OCI-LY7 (cell line): ENCODE measurements at regions of chr17 and their contacts with region 1.

Region 1: DNA sequence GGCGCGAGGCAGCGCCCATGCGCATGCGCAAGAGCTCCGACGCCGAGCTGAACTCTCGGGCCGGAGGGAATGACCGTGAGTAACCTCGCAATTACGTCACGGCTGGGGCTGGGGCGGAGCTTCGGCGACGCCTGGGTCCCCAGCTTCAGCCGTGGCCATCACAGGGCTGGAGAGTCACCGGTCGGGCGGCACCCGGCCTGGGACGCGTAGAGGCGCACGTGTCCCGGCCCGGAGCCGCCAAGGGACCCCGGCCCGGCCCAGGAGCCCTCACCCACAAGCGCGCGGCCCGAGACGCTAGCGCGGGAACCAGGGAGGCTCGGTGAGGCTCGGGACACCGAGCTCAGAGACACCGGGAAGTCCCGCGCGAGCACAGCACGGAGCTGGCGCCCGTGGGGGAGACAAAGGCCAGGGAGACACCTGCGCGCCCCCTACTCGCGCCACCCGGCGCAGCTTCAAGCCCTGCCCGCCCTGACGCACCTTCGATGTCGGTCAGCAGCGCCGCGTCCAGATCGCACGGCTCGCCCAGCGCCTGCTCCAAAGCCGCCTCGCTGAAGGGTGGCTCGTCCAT is 452 bp downstream of the SREBF1 start:
- DNase-seq: peak; percentile 98
- H3K4me3 ChIP-seq: peak overlapping the region; percentile 77
- H3K27ac ChIP-seq: peak overlapping the region; percentile 88
- H3K4me1 ChIP-seq: peaks cover 71% of the 10 kb centered on the region
- CTCF ChIP-seq: no peak

Region 2: DNA sequence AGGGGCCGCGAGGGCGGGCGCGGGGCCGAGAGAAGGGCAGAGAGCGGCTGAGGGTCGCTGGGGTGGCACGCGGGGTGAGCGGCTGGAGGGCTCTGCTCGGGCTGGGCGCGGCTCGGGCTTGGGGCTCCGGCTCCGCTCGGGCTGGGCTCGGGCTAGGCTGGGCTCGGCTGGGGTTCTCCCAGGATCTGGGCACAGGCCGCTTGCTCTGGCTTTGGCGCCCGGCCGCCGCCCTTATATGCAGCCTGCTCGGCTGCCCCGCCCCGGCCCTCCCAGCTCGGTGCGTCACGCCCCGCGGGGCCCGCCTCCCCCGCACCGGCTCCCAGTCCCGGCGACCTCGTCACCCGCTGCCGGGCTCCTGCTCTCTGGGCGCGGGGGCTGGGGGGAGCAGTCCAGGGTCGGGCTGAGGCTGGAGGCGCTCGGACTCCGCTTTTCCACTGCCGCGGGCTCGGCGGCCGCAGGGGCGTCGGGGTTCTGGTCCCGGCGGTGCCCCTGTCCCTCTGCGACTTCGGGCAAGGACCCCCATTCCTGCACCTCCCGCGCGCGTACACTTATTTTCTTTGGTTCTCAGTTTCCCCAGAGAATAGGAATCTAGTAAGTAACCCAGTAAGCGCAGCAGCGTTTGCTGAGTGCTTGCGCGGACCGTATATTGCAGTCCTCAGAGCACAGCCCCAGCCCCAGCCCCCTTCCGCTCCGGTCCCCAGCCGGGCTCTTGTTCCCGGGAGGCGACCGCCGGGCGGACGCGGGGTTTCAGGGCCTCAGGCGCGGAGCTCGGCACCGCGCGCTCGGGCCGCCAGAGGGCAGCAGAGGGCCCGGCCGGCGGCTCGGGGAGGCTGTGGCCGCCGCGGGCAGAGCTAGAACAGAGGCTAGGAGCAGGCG is 339.9 kb before region 1 on chr17 and contains the start of gene RASD1:
- CTCF ChIA-PET with region 1: no interaction called
- POLR2A ChIA-PET with region 1: no interaction called
- intact Hi-C with region 1: no loop called
- DNase-seq: peak; percentile 75
- H3K4me3 ChIP-seq: peak within 1 kb of the TSS; percentile 41
- H3K27ac ChIP-seq: no peak within 1 kb of the TSS
- H3K4me1 ChIP-seq: peaks cover 10% of the 10 kb centered on the region
- CTCF ChIP-seq: peak; percentile 83
- total RNA-seq, gene RASD1: 0.08 and 0.19 TPM in 2 replicates

Region 3: DNA sequence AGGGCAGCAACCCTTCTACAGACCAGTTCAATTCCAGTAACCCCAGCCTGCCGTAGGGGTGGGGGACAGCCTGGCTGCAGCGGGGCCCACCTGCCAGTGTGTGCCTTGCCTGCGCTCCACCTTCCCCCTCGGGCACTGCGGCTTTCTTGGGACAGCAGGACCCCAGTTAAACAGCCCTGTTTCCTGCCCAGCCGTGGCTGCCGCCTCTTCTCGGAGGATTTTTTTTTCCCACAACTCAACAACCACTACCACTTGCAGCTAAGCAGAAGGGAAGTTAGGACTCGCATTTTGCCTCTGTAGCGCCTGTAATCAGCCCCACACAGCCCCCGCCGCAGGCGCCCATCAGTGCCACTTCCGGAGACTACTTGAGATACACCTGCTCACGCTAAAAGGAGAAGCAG is 78.9 kb before region 1 on chr17:
- CTCF ChIA-PET with region 1: no interaction called
- POLR2A ChIA-PET with region 1: interaction called, 5 read pairs
- intact Hi-C with region 1: loop called (anchors 2 kb)
- DNase-seq: peak; percentile 91
- H3K4me3 ChIP-seq: peak overlapping the region; percentile 61
- H3K27ac ChIP-seq: peak overlapping the region; percentile 98
- H3K4me1 ChIP-seq: peaks cover 100% of the 10 kb centered on the region
- CTCF ChIP-seq: no peak

Region 4: DNA sequence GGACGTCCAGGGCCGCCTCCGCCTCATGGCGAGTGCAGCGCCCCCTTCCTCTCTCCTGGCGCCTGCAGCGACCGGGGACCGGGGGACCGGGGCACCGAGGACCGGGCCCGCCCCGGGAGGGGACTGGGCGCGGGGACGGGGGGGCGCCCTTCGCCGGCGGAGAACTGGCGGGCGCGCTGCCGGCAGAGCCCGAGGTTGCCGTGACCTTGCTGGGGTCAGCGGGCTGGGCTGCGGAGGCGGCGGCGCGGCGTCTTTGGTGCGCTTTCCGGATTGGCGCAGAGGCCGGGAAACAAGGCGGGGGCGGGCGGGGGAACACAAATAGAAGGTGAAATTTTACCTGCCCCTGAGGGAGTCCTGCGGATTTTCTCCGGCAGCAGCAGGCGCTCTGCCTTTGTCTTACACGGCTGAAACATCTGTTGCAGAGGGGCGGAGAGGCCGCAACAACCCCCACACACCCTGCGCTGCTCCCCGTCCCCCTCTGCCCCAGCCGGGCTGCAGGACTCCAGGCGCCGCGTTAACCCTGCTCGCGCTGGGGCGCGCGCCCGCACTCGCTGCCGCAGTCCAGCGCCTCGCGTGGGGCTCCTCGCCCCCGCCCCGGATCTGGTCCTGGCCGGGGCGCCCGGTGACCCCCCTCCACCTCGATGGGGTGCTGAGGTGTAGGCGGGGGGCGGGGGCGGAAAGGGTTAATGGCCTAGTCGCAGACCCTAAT is 53.1 kb before region 1 on chr17:
- CTCF ChIA-PET with region 1: no interaction called
- POLR2A ChIA-PET with region 1: no interaction called
- intact Hi-C with region 1: no loop called
- DNase-seq: peak; percentile 93
- H3K4me3 ChIP-seq: peak overlapping the region; percentile 68
- H3K27ac ChIP-seq: peak overlapping the region; percentile 99
- H3K4me1 ChIP-seq: peaks cover 54% of the 10 kb centered on the region
- CTCF ChIP-seq: peak; percentile 66

Region 5: DNA sequence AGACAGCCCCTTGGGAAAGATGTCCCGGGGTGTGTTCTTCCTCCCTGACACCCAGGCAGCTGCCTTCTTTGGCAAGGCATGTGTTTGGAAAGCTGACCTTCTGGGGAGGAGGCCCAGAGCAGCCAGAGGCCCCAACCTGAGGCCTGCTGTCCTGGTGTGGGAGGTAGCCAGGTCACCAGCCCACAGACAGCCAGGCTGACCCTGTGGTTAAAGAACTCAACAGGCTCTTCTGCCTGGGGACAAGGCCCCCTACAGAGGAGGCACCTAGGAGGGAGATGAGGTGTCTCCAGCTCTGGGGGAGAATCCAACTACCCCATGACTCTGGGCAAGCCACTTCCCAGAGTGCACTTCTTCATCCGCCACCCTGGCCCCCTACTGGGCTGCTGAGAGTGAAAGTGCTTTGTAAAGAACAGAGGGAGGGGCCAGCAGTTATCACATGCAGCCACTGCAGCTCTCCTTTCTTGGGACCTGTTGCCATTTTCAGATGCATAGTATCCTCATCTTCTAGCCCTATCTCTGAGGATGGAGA is 13.6 kb after region 1 on chr17:
- CTCF ChIA-PET with region 1: interaction called, 4 read pairs
- POLR2A ChIA-PET with region 1: interaction called, 12 read pairs
- intact Hi-C with region 1: no loop called
- DNase-seq: peak; percentile 85
- H3K4me3 ChIP-seq: no peak overlapping the region
- H3K27ac ChIP-seq: peak overlapping the region; percentile 39
- H3K4me1 ChIP-seq: peaks cover 23% of the 10 kb centered on the region
- CTCF ChIP-seq: peak; percentile 68